PC-9 (cell line): ENCODE measurements at regions of chr10 and their contacts with region 1.

Region 1: DNA sequence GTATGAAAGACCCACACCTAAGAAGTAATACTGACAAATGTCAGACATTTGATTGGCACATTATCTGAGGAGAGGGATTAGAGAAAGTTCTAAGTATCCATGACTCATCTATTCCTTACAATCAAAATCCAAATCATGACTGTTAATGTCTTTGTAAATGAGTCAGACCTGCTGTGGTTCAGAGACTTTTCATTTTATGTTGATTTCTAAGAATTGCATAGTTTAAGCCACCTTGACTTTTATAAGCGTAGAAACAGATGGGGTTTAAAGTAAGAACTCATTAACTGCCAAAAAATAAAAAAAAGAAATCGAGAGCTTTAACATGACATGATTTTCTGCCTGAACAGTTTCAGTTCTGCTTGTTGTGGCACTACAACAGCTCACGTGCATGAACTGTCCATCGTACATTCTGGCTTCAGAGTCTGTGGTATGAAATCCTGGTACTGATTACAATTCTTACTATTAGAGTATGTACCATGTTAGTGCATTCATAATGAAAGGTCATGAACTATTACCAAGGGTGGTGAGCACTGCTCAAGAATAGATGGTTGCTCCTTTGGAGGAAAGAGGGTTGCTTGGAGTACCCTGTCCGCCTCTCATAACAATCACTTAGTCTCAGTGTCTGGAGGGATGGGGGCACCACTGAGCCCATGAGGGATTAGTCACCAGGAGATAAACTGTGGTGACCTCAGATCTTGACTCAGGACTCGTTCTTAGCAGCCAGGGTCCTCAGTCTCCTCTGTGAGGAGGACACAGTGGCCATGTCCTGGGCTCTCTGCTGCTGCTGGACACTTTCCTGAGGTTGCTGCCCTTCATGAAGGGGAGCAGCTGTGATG is 42.2 kb downstream of the ACSM6 start:
- DNase-seq: peak; percentile 19 to 83
- H3K4me3 ChIP-seq: no peak overlapping the region
- H3K27ac ChIP-seq: peak overlapping the region; percentile 98
- H3K4me1 ChIP-seq: peaks cover 39% of the 10 kb centered on the region
- H3K27me3 ChIP-seq: no peaks in the 10 kb centered on the region
- CTCF ChIP-seq: no peak

Region 2: GRCh38 chr10:95221124-95221523 is 15.2 kb before region 1 on chr10:
- CTCF ChIA-PET with region 1: no interaction called
- POLR2A ChIA-PET with region 1: interaction called, 3 read pairs
- intact Hi-C with region 1: loop called (anchors 2 kb)
- DNase-seq: peak; percentile 65 to 82
- H3K4me3 ChIP-seq: no peak overlapping the region
- H3K27ac ChIP-seq: peak overlapping the region; percentile 91
- H3K4me1 ChIP-seq: peaks cover 44% of the 10 kb centered on the region
- H3K27me3 ChIP-seq: no peaks in the 10 kb centered on the region
- CTCF ChIP-seq: no peak